CD8-positive, alpha-beta memory T cell (primary cell): ENCODE measurements at regions of chr15 and their contacts with region 1.

Region 1: GRCh38 chr15:50883903-50884302 is 24.6 kb upstream of the AP4E1 start:
- DNase-seq: no peak
- H3K4me3 ChIP-seq: no peak overlapping the region
- H3K4me3 Mint-ChIP-seq: peak overlapping the region in 3 of 7 donors; percentile 25 to 53 (median 38)
- H3K27ac ChIP-seq: no peak overlapping the region
- H3K27ac Mint-ChIP-seq: peak overlapping the region in 5 of 8 donors; percentile 17 to 67 (median 35)
- H3K4me1 ChIP-seq: peaks cover 14% of the 10 kb centered on the region
- H3K4me1 Mint-ChIP-seq: peaks cover 39 to 67% (median 47%) of the 10 kb centered on the region in 3 donors
- H3K27me3 ChIP-seq: no peaks in the 10 kb centered on the region
- H3K27me3 Mint-ChIP-seq: no peaks in the 10 kb centered on the region

Region 2: DNA sequence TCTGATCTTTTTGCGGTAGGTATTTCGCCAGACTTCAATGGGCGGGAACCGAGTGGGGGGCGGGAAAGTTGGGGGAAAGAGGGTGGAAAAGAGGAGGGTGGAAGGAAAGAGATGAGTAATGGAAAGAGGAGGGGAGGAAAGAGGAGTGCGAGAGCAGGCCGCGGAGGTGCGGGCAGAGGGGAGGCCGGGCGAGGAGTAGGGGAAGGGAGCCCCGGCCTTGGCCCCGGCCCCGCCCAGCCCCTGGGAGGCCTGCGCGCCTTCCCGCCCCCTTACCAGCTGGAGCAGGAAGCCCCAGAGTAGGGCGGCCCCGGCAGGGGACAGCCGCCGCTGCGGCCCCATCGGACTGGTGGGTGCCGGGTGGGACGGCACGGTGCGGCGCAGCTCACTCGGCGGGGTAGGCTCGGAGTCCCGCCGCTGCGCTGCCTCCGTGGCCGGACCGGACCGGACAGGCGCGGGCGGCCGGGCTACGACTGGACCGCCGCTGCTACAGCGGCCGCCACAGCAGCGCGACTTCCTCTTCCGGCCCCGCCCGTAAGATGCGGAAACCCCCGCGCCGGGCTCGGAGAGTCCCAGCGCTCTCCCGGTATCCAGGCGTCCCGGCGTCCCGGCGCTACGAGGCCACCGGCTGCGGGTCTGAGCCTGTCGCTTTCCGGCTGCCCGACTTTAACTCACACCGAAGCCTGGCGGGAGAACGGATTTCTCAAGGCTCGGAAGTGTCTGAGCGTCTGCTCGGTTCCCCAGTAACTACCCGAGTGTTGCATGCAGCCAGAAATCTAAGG is 118.5 kb before region 1 on chr15 and contains the start of gene SPPL2A:
- CTCF ChIA-PET with region 1: no interaction called
- POLR2A ChIA-PET with region 1: interaction called, 10 read pairs
- DNase-seq: peak; percentile 70 to 85 (median 75)
- H3K4me3 ChIP-seq: peak within 1 kb of the TSS; percentile 91
- H3K4me3 Mint-ChIP-seq: peak within 1 kb of the TSS; percentile 88 to 98 (median 93)
- H3K27ac ChIP-seq: peak within 1 kb of the TSS; percentile 88
- H3K27ac Mint-ChIP-seq: peak within 1 kb of the TSS; percentile 87 to 99 (median 96)
- H3K4me1 ChIP-seq: peaks cover 12% of the 10 kb centered on the region
- H3K4me1 Mint-ChIP-seq: peaks cover 38 to 55% (median 52%) of the 10 kb centered on the region in 3 donors
- H3K27me3 ChIP-seq: no peaks in the 10 kb centered on the region
- H3K27me3 Mint-ChIP-seq: no peaks in the 10 kb centered on the region
- total RNA-seq, gene SPPL2A: 105 TPM

Region 3: DNA sequence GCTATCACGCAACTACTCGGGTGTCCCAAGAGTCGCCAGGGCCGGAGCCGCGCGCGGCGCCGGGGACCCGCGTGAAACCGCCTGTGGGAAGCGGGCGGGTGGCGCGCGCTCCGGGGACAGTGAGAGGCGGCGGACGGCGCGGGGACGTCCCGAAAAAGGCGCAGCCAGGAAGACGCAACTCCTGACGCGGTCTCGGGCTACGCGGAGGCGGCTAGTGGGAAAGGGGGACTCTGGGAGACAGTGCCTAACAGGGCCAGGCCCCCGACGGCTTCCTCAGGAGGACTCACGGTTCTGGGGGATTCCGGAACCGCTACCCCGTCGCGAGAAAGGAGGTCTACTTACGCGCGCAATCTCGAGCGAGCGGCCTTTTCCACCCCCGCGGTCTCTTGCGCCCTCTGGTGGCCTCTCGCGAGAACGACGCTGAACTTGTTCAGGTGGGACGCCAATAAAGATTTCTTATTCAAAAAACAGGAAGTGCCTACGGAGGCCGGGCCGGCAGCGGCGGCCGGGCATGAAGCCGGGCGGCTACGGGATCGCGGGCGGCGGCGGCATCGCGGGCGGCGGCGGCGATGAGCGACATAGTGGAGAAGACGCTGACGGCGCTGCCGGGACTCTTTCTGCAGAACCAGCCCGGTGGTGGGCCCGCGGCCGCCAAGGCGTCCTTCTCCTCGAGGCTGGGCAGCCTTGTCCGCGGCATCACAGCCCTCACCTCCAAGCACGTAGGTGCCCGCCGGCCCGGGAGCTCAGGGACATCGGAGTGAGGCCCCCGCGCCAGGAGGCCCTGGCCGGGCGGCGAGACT is 24.5 kb after region 1 on chr15 and contains the start of gene AP4E1:
- CTCF ChIA-PET with region 1: interaction called, 32 read pairs
- POLR2A ChIA-PET with region 1: interaction called, 5 read pairs
- DNase-seq: peak; percentile 93 to 96 (median 94)
- H3K4me3 ChIP-seq: peak within 1 kb of the TSS; percentile 87
- H3K4me3 Mint-ChIP-seq: peak within 1 kb of the TSS; percentile 87 to 99 (median 97)
- H3K27ac ChIP-seq: peak within 1 kb of the TSS; percentile 94
- H3K27ac Mint-ChIP-seq: peak within 1 kb of the TSS; percentile 97 to 100 (median 99)
- H3K4me1 ChIP-seq: peaks cover 6% of the 10 kb centered on the region
- H3K4me1 Mint-ChIP-seq: peaks cover 21 to 33% (median 30%) of the 10 kb centered on the region in 3 donors
- H3K27me3 ChIP-seq: no peaks in the 10 kb centered on the region
- H3K27me3 Mint-ChIP-seq: no peaks in the 10 kb centered on the region
- total RNA-seq, gene AP4E1: 16.5 to 18.8 TPM